ENCODE measurements at regions of chr5 and their contacts with region 1.

Region 1: DNA sequence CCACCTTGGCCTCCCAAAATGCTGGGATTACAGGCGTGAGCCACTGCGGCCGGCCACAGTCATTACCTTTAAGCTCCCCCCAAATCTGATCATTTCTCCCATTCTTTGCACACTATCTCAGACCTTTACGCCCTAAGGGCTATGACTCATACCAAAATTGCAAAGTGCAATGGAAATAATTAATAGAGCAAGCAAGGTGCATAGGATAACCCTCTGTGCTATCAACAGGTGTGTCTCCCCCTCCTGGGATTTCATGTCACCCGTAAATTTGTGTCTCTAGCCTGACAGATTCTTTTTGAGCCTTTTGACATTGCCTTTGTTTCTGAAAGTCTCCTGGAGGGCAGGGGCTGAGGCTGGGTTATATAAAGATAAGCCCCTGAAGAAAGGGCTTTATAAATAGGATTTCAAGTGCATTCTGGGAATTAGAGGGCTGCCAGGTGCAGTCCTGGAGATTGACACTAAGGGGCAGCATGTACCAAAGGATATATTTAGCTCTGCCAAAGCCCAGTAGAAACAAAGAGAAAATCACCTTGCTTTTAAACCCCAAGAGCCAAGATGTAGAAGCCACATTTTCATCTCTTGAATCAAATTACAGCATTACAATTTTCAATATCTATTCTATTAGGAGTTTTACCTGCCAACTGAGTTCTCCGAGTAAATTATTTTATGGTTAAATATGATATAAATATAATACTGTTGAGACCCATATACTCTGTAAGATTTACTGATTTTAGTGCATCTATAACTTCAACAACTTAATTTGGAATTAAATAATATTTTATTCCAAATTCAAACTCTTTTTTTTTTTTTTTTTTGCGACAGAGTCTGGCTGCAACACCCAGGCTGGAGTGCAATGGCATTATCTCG is 18.2 kb downstream of the S100Z start:
- DNase-seq: peak; percentile 56 to 63 (median 62)
- H3K4me3 ChIP-seq: no peak overlapping the region
- H3K4me3 Mint-ChIP-seq: no peak overlapping the region
- H3K27ac ChIP-seq: no peak overlapping the region
- H3K27ac Mint-ChIP-seq: no peak overlapping the region
- H3K4me1 ChIP-seq: no peaks in the 10 kb centered on the region
- H3K4me1 Mint-ChIP-seq: peaks cover 0 to 2% (median 0%) of the 10 kb centered on the region in 4 donors
- H3K27me3 ChIP-seq: no peaks in the 10 kb centered on the region
- H3K27me3 Mint-ChIP-seq: no peaks in the 10 kb centered on the region

Region 2: GRCh38 chr5:77076961-77077823 is 209.1 kb after region 1 on chr5:
- CTCF ChIA-PET with region 1: interaction called, 6 read pairs
- POLR2A ChIA-PET with region 1: no interaction called
- intact Hi-C with region 1: loop called (anchors 1 kb)
- DNase-seq: peak; percentile 25 to 44 (median 35)
- H3K4me3 ChIP-seq: no peak overlapping the region
- H3K4me3 Mint-ChIP-seq: peak overlapping the region; percentile 39 to 78 (median 60)
- H3K27ac ChIP-seq: no peak overlapping the region
- H3K27ac Mint-ChIP-seq: peak overlapping the region in 1 of 7 donors; percentile 26
- H3K4me1 ChIP-seq: peaks cover 5% of the 10 kb centered on the region
- H3K4me1 Mint-ChIP-seq: peaks cover 6 to 9% (median 8%) of the 10 kb centered on the region in 4 donors
- H3K27me3 ChIP-seq: no peaks in the 10 kb centered on the region
- H3K27me3 Mint-ChIP-seq: no peaks in the 10 kb centered on the region

Region 3: GRCh38 chr5:77449277-77449676 is 581.2 kb after region 1 on chr5:
- CTCF ChIA-PET with region 1: no interaction called
- POLR2A ChIA-PET with region 1: no interaction called
- intact Hi-C with region 1: no loop called
- DNase-seq: no peak
- H3K4me3 ChIP-seq: no peak overlapping the region
- H3K4me3 Mint-ChIP-seq: no peak overlapping the region
- H3K27ac ChIP-seq: no peak overlapping the region
- H3K27ac Mint-ChIP-seq: no peak overlapping the region
- H3K4me1 ChIP-seq: no peaks in the 10 kb centered on the region
- H3K4me1 Mint-ChIP-seq: peaks cover 0 to 2% (median 0%) of the 10 kb centered on the region in 4 donors
- H3K27me3 ChIP-seq: no peaks in the 10 kb centered on the region
- H3K27me3 Mint-ChIP-seq: no peaks in the 10 kb centered on the region

Region 4: GRCh38 chr5:77491783-77492652 is 624.0 kb after region 1 on chr5 and contains the start of gene WDR41:
- CTCF ChIA-PET with region 1: interaction called, 18 read pairs
- POLR2A ChIA-PET with region 1: interaction called, 3 read pairs
- intact Hi-C with region 1: loop called (anchors 1 kb)
- DNase-seq: peak; percentile 79 to 87 (median 84)
- H3K4me3 ChIP-seq: peak within 1 kb of the TSS; percentile 57 to 91
- H3K4me3 Mint-ChIP-seq: peak within 1 kb of the TSS; percentile 85 to 95 (median 91)
- H3K27ac ChIP-seq: peak within 1 kb of the TSS; percentile 64
- H3K27ac Mint-ChIP-seq: peak within 1 kb of the TSS; percentile 65 to 94 (median 91)
- H3K4me1 ChIP-seq: peaks cover 7% of the 10 kb centered on the region
- H3K4me1 Mint-ChIP-seq: peaks cover 9 to 14% (median 10%) of the 10 kb centered on the region in 4 donors
- H3K27me3 ChIP-seq: no peaks in the 10 kb centered on the region
- H3K27me3 Mint-ChIP-seq: peaks cover 10 to 12% of the 10 kb centered on the region in 2 donors
- total RNA-seq, gene WDR41: 11.0 to 14.0 TPM

Region 5: GRCh38 chr5:78162253-78162862 is 1294.3 kb after region 1 on chr5:
- CTCF ChIA-PET with region 1: interaction called, 3 read pairs
- POLR2A ChIA-PET with region 1: no interaction called
- intact Hi-C with region 1: loop called (anchors 5 kb)
- DNase-seq: peak in 4 of 5 donors; percentile 2 to 23 (median 10)
- H3K4me3 ChIP-seq: no peak overlapping the region
- H3K4me3 Mint-ChIP-seq: no peak overlapping the region
- H3K27ac ChIP-seq: no peak overlapping the region
- H3K27ac Mint-ChIP-seq: no peak overlapping the region
- H3K4me1 ChIP-seq: no peaks in the 10 kb centered on the region
- H3K4me1 Mint-ChIP-seq: peaks cover 0 to 2% (median under 1%) of the 10 kb centered on the region in 4 donors
- H3K27me3 ChIP-seq: no peaks in the 10 kb centered on the region
- H3K27me3 Mint-ChIP-seq: no peaks in the 10 kb centered on the region

Measured in CD4-positive, alpha-beta memory T cell (primary cell).